GM10248 (cell line): ENCODE measurements at regions of chr10 and their contacts with region 1.

Region 1: GRCh38 chr10:44974628-44975431 is 3.8 kb downstream of the DEPP1 start:
- DNase-seq: peak; percentile 85
- CTCF ChIP-seq: peak; percentile 88

Region 2: GRCh38 chr10:44517635-44518034 is 457.2 kb before region 1 on chr10:
- CTCF ChIA-PET with region 1: no interaction called
- POLR2A ChIA-PET with region 1: no interaction called
- DNase-seq: peak; percentile 21
- CTCF ChIP-seq: no peak

Region 3: DNA sequence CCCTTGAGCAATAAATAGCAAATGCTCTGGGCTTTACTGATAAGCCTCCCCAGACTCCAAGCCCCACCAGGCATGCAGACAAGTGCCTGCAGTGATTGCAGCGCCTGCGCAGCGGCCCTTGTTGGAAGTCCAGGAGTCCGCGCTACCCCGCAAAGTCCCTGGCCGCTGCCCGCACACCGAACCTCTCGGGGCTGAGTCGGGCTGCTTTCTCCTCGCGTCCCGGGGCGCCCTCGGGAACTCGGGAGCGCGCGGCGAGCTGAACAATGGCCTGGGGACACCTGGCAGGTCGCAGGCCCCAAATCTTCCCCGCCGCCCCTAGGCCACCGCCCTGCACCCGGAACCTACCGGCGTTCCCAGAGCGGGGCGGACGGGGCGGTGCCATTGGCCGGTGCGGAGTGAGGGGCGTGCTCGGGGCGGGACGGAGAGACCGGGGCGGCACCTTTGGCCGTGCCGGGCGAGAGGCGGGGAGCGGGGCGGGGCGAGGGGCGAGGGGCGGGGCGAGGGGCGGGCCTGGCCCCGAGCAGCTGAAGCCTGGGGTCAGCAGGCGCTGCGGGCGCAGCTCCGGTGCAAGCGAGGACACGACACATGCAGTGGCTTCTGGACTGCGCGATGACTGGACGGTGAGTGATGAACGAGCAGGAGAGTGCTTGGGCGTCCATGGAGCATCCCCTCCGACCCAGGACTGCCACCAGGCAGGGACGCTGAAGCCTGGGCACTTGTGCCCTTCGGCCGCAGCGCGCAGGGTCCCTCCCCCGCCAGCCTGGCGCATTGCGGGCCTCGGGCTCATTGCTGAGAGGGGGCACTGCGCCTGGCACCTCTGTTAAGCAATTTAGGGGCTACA is 15.4 kb before region 1 on chr10 and contains the start of gene RASSF4:
- CTCF ChIA-PET with region 1: interaction called, 151 read pairs
- POLR2A ChIA-PET with region 1: interaction called, 9 read pairs
- DNase-seq: peak; percentile 99
- CTCF ChIP-seq: no peak

Region 4: DNA sequence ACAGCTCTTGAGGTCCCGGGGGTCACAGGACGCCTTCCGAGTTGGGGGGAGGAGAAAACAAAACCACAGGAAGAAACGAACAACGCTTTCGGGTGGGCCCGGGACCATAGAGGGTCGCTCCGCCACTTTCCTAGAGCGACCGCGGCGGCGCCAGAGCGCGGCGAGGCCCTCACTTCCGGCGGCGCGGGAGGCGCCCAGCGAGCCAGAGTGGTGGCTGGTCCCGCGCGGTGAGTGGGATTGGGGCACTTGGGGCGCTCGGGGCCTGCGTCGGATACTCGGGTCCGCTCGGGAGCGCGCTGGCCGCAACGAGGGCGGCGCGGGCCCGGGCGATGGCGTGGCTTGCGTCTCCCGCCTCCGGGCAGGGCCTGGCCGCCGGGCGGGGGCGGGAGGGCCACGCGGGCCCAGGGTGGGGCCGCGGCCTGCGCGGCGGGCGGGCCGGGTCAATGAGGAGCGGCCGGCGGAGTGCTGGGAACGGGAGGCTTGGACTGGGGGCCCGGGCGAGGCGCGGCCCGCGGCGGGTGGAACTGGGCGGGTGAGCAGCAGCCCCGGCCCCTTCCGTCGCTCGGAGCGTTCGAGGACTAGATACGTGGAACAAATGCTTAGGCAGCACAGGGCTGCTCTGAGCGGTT is 26.0 kb after region 1 on chr10 and contains the start of gene ZNF22:
- CTCF ChIA-PET with region 1: interaction called, 8 read pairs
- POLR2A ChIA-PET with region 1: interaction called, 13 read pairs
- DNase-seq: peak; percentile 79
- CTCF ChIP-seq: no peak